PC-9 (cell line): ENCODE measurements at regions of chr3 and their contacts with region 1.

Region 1: GRCh38 chr3:128487813-128488635 is 5.0 kb downstream of the GATA2 start:
- DNase-seq: peak; percentile 81 to 94
- H3K4me3 ChIP-seq: peak overlapping the region; percentile 93
- H3K27ac ChIP-seq: peak overlapping the region; percentile 7; the same call in 1 of the 2 replicates
- H3K4me1 ChIP-seq: peaks cover 44% of the 10 kb centered on the region
- H3K27me3 ChIP-seq: no peaks in the 10 kb centered on the region
- CTCF ChIP-seq: no peak

Region 2: DNA sequence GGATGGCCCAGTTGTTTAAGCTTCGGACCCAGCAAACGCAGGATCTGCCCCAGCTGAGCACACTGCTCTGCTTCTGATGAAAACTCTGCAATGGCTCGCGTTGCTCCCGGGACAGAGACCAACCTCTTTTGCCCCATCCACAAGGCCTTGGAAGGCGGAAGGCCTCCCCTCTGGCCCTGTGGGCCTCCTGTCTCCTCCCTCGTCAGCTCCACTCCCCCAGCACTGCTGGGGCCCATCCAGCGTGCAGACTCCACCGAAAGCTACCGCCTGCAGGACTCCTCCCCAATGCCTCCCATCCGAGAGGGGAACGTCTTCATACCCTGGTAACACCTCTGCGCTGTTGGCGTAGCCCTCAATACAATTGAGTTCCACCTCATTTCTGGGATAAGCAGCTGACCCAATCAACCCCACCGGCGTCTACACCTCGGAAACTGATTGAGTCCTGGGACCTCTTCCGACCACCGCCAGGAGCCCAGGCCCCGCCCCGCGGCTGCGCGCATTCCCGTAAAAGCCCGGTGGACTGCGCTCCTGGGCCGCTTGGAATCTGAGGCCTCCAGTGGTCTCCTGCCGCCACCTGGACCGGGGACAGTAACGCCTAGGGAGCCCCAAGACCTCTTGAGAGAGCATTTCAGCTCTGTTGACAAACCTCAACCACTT is 1295.3 kb before region 1 on chr3 and contains the start of gene PRR23E:
- CTCF ChIA-PET with region 1: no interaction called
- POLR2A ChIA-PET with region 1: no interaction called
- intact Hi-C with region 1: no loop called
- DNase-seq: no peak
- H3K4me3 ChIP-seq: no peak within 1 kb of the TSS
- H3K27ac ChIP-seq: no peak within 1 kb of the TSS
- H3K4me1 ChIP-seq: no peaks in the 10 kb centered on the region
- H3K27me3 ChIP-seq: no peaks in the 10 kb centered on the region
- CTCF ChIP-seq: no peak
- total RNA-seq, gene PRR23E: not detected in 2 replicates

Region 3: GRCh38 chr3:128163432-128163831 is 324.6 kb before region 1 on chr3:
- CTCF ChIA-PET with region 1: no interaction called
- POLR2A ChIA-PET with region 1: no interaction called
- intact Hi-C with region 1: no loop called
- DNase-seq: no peak
- H3K4me3 ChIP-seq: no peak overlapping the region
- H3K27ac ChIP-seq: no peak overlapping the region
- H3K4me1 ChIP-seq: no peaks in the 10 kb centered on the region
- H3K27me3 ChIP-seq: no peaks in the 10 kb centered on the region
- CTCF ChIP-seq: no peak

Region 4: DNA sequence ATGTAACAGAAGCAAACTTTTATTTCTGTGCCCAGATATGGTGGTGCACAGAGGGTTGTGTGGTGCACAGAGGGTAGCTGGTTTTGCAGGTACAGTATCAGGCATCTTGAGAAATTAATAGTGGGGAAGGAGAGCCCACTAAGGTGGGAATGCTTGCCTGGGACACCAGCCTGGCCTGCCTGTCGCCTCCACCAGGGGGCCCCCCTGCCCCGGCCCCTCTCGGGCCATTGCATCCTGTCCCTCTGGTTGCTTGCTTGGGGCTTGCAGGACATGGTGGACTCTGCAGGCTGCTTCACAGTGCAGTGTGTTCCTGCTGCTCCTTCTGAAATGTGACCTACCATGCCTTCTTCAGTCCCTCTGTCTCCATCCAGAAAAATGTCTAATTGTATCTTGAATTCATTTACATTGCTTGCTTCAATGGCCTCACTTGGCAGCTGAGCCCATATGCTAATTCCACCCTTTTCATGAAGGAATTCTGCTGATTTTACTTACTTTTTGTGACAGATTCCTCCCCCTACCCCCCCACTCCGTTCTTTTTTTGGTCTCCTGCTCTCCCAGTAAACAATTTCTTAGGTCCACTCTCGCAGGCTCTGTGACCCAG is 261.1 kb before region 1 on chr3:
- CTCF ChIA-PET with region 1: no interaction called
- POLR2A ChIA-PET with region 1: no interaction called
- intact Hi-C with region 1: loop called (anchors 2 kb)
- DNase-seq: peak in 1 of 2 experiments; percentile 68
- H3K4me3 ChIP-seq: no peak overlapping the region
- H3K27ac ChIP-seq: no peak overlapping the region
- H3K4me1 ChIP-seq: no peaks in the 10 kb centered on the region
- H3K27me3 ChIP-seq: no peaks in the 10 kb centered on the region
- CTCF ChIP-seq: peak; percentile 81

Region 5: GRCh38 chr3:128435072-128435471 is 53.0 kb before region 1 on chr3:
- CTCF ChIA-PET with region 1: interaction called, 3 read pairs
- POLR2A ChIA-PET with region 1: interaction called, 4 read pairs
- intact Hi-C with region 1: loop called (anchors 1 kb)
- DNase-seq: peak; percentile 99
- H3K4me3 ChIP-seq: peak overlapping the region; percentile 16; the same call in 1 of the 2 replicates
- H3K27ac ChIP-seq: peak overlapping the region; percentile 77
- H3K4me1 ChIP-seq: peaks cover 63% of the 10 kb centered on the region
- H3K27me3 ChIP-seq: no peaks in the 10 kb centered on the region
- CTCF ChIP-seq: no peak

Region 6: DNA sequence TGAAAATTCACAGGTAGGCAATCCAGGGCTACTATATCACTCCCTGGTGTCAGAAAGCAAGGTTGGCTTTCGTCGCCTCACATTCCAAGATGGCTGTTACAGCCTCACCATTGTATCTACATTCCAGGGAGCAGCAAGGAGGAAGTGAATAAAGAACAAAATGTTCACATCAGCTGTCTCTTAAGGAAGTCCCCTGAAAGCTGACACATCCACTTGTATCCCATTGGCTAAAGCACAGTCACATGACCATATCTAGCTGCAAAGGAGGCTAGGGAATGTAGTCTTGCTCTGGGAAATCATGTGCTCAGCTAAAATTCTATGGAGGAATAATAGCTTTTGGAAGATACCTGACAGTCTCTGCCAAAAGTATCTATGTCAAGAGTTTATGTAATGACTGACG is 17.7 kb after region 1 on chr3:
- CTCF ChIA-PET with region 1: no interaction called
- POLR2A ChIA-PET with region 1: interaction called, 6 read pairs
- intact Hi-C with region 1: loop called (anchors 1 kb)
- DNase-seq: no peak
- H3K4me3 ChIP-seq: no peak overlapping the region
- H3K27ac ChIP-seq: no peak overlapping the region
- H3K4me1 ChIP-seq: peaks cover 19% of the 10 kb centered on the region
- H3K27me3 ChIP-seq: no peaks in the 10 kb centered on the region
- CTCF ChIP-seq: no peak